Activated CD4-positive, alpha-beta T cell treated with anti-CD3 and anti-CD28 coated beads for 36 hours (primary cell): ENCODE measurements at regions of chr2 and their contacts with region 1.

Region 1: DNA sequence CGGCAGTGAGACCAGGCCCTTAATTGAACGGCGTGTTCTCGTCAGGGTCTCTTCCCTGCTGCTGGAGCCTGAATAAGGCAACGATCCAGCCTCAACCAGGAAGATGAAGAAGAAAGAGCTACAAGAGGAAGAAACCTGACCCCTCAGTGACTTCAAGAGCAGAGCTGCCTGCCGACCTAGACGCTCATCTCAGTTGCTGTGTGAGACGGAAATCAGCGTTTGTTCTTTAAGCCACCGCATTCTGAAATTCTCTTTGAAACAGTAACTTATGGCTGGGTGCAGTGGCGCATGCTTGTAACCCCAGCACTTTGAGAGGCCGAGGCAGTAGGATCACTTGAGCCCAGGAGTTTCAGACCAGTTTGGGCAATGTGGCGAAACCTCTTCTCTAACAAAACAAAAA is 29.6 kb upstream of the KCNG3 start:
- DNase-seq: peak; percentile 9
- ATAC-seq: no peak
- H3K4me3 Mint-ChIP-seq: no peak overlapping the region
- H3K27ac Mint-ChIP-seq: peak overlapping the region; percentile 1
- H3K4me1 Mint-ChIP-seq: peaks cover 5% of the 10 kb centered on the region
- H3K27me3 Mint-ChIP-seq: no peaks in the 10 kb centered on the region

Region 2: GRCh38 chr2:42102024-42102590 is 421.3 kb before region 1 on chr2:
- CTCF ChIA-PET with region 1: no interaction called
- POLR2A ChIA-PET with region 1: no interaction called
- intact Hi-C with region 1: no loop called
- DNase-seq: peak; percentile 89
- ATAC-seq: peak; percentile 40
- H3K4me3 Mint-ChIP-seq: peak overlapping the region; percentile 69
- H3K27ac Mint-ChIP-seq: peak overlapping the region; percentile 94
- H3K4me1 Mint-ChIP-seq: peaks cover 38% of the 10 kb centered on the region
- H3K27me3 Mint-ChIP-seq: no peaks in the 10 kb centered on the region

Region 3: DNA sequence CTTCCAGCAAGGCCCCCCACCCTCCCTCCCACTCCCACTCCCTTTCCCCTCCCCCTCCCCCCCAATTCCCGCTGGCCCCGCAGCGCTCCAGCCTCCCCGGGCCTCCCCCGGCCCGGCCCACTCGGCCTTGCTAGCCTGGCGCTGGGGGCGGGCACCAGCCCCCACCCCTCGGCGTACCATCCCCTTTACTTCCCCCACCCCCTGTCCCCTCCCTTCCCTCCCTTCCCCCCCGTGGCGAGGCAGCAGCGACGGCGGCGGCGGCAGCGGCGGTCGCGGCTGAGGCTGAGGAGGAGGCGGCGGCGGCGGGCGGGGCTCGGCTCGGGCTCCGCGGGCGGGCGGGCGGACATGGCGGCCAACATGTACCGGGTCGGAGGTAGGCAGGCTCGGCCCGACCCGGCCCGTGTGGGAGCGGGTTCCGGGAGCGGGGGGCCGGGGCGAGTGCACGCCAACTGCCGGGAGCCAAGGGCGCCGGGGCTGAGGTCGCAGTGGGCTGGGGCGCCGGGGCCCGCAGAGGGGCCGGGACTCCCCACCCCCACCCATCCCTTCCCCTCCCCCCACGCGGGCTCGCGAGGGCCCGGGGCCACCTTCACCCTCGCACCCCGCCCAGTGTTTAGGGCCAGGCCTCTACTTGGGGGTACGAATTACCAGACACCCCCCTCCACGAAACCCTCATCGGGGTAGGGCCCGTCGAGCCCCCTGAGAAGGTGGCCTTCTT is 45.2 kb after region 1 on chr2 and contains the start of gene MTA3:
- CTCF ChIA-PET with region 1: no interaction called
- POLR2A ChIA-PET with region 1: no interaction called
- intact Hi-C with region 1: loop called in 1 of 2 experiments (anchors 5 kb)
- DNase-seq: peak; percentile 81
- ATAC-seq: peak; percentile 81
- H3K4me3 Mint-ChIP-seq: peak within 1 kb of the TSS; percentile 86
- H3K27ac Mint-ChIP-seq: peak within 1 kb of the TSS; percentile 91
- H3K4me1 Mint-ChIP-seq: peaks cover 32% of the 10 kb centered on the region
- H3K27me3 Mint-ChIP-seq: no peaks in the 10 kb centered on the region
- total RNA-seq, gene MTA3: 45.0 to 58.6 TPM

Region 4: DNA sequence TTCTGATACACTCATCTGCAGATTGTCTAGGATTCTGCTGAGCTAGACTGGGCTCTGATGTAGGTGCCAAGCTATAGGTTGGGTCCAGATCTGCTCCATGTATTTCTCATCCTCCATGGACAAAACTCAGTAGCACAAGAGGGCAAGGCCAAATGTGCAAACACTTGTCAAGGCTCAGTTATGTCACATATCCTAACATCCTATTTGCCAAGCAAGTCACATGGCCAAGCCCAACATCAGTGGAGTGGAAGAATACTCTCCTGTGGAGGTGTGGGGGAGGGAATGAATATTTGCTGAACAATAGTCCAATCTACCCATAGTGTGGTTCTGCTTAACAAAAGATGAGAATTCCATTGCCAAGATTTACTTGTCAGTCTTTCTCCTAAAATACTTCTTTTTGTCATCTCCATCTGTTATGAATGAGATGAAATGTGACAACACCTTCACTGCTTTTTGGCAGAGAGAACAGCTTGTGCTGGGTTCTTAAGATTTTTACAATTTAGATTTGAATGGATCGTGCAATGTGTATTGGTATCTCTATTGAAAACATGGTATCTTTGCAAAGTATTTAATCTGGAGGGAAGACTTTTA is 150.7 kb after region 1 on chr2:
- CTCF ChIA-PET with region 1: no interaction called
- POLR2A ChIA-PET with region 1: no interaction called
- intact Hi-C with region 1: no loop called
- DNase-seq: no peak
- ATAC-seq: no peak
- H3K4me3 Mint-ChIP-seq: no peak overlapping the region
- H3K27ac Mint-ChIP-seq: no peak overlapping the region
- H3K4me1 Mint-ChIP-seq: peaks cover 8% of the 10 kb centered on the region
- H3K27me3 Mint-ChIP-seq: no peaks in the 10 kb centered on the region